Mucosa of descending colon (tissue), 3 donors: ENCODE measurements at regions of chr1 and their contacts with region 1.

Region 1: DNA sequence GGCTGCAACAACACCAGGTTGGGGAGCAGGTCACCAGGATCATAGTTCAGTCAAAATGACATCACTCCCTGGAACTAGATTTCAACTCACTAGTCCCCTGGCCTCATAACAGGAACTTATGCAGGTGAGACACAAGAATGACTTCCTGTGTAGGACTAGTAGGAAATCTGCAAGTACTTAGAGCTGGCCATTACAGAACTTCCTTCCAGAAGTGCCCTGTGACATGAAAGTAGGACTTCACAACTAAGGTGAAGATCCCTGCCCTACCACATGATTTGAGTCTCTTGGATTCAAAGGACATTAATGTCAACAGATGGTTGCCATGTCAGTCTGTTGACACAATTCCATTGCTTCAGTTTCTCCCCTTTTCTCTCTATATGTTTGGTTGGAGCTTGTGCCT is 223.1 kb downstream of the RPS6KC1 start:
- DNase-seq: no peak
- ATAC-seq: no peak
- H3K4me3 ChIP-seq: no peak overlapping the region
- H3K4me1 ChIP-seq: no peaks in the 10 kb centered on the region
- CTCF ChIP-seq: no peak

Region 2: DNA sequence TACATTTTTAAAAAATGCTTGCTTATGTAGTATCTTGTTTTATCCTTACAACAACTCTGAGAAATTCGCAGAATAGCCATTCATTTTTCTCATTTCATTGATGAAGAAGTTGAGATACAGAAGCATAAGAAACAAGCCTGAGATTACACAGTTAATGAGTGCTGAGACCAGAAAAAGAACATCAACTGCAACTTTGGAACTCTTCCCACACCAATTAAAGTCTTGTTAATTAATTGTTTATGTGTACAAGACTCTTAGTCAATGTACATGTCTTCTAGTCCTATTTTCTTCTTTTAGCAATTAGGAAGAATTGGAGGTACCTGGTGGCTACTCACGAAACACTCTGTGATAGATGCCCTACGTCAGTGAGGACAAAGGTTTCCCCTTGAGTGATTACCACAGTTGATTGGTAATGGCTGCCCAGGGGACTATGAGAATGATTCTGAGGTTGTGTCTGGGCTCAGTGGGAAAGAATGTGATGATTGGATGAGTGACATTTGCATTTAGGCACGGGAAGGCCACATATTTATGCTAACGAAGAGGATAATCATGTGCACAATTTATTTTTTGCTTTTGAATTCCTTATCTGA is 1621.0 kb after region 1 on chr1:
- intact Hi-C with region 1: loop called in 1 of 2 experiments (anchors 5 kb)
- DNase-seq: no peak
- ATAC-seq: no peak
- H3K4me3 ChIP-seq: no peak overlapping the region
- H3K4me1 ChIP-seq: no peaks in the 10 kb centered on the region
- CTCF ChIP-seq: no peak